Mammary epithelial cell (primary cell): ENCODE measurements at regions of chr20 and their contacts with region 1.

Region 1: GRCh38 chr20:19889011-19889953 is 127.9 kb upstream of the NAA20 start:
- DNase-seq: peak; percentile 56
- H3K4me3 ChIP-seq: peak overlapping the region; percentile 25 to 39 (median 31)
- H3K27ac ChIP-seq: peak overlapping the region; percentile 64
- H3K4me1 ChIP-seq: peaks cover 59% of the 10 kb centered on the region
- H3K27me3 ChIP-seq: no peaks in the 10 kb centered on the region
- CTCF ChIP-seq: no peak

Region 2: GRCh38 chr20:19764207-19764606 is 125.1 kb before region 1 on chr20:
- CTCF ChIA-PET with region 1: no interaction called
- dilution Hi-C with region 1: no loop called
- in situ Hi-C with region 1: no loop called
- intact Hi-C with region 1: no loop called
- DNase-seq: no peak
- H3K4me3 ChIP-seq: no peak overlapping the region
- H3K27ac ChIP-seq: no peak overlapping the region
- H3K4me1 ChIP-seq: peaks cover 2% of the 10 kb centered on the region
- H3K27me3 ChIP-seq: no peaks in the 10 kb centered on the region
- CTCF ChIP-seq: no peak

Region 3: DNA sequence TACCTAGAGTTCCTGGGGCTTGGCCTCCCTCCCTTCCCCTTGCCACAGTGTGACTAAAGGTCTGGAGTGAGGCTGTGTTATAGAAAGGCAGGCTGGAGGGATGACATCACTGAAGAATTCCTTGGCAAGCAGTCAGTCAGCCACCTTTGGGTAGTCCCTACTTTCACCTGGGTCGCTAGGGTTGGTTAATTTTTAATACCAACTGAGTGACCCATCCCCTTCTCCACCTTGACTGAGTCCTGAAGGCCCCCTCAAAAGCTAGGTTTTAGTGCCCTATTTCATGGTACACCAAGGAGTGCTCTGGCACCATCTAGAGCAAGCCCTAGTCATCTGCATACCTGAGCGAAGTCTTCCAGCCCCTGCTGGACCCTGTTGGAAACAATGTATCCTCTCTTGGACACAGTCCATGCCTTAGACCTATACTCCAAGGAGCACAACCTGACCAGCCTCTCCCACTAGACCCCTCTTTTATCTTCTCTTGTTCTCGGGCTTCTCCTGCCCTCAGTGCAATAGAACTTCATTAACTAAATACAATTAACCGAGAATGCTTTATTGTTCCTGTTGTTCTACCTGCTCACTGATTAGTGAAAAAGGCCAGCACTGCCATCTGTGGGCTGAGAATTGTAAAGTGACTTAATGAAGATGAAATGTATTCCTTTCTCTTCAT is 86.7 kb before region 1 on chr20:
- CTCF ChIA-PET with region 1: no interaction called
- dilution Hi-C with region 1: no loop called
- in situ Hi-C with region 1: no loop called
- intact Hi-C with region 1: loop called (anchors 1 kb)
- DNase-seq: peak; percentile 89
- H3K4me3 ChIP-seq: no peak overlapping the region
- H3K27ac ChIP-seq: peak overlapping the region; percentile 43
- H3K4me1 ChIP-seq: peaks cover 26% of the 10 kb centered on the region
- H3K27me3 ChIP-seq: no peaks in the 10 kb centered on the region
- CTCF ChIP-seq: peak; percentile 39 to 43

Region 4: GRCh38 chr20:19903168-19903811 is 14.0 kb after region 1 on chr20:
- CTCF ChIA-PET with region 1: interaction called, 17 read pairs
- dilution Hi-C with region 1: no loop called
- in situ Hi-C with region 1: no loop called
- intact Hi-C with region 1: no loop called
- DNase-seq: no peak
- H3K4me3 ChIP-seq: no peak overlapping the region
- H3K27ac ChIP-seq: no peak overlapping the region
- H3K4me1 ChIP-seq: no peaks in the 10 kb centered on the region
- H3K27me3 ChIP-seq: no peaks in the 10 kb centered on the region
- CTCF ChIP-seq: no peak

Region 5: GRCh38 chr20:19928328-19929011 is 39.2 kb after region 1 on chr20:
- CTCF ChIA-PET with region 1: no interaction called
- dilution Hi-C with region 1: no loop called
- in situ Hi-C with region 1: no loop called
- intact Hi-C with region 1: loop called (anchors 1 kb)
- DNase-seq: peak; percentile 97
- H3K4me3 ChIP-seq: no peak overlapping the region
- H3K27ac ChIP-seq: peak overlapping the region; percentile 80
- H3K4me1 ChIP-seq: peaks cover 26% of the 10 kb centered on the region
- H3K27me3 ChIP-seq: no peaks in the 10 kb centered on the region
- CTCF ChIP-seq: no peak

Region 6: GRCh38 chr20:19995220-19995863 is 106.1 kb after region 1 on chr20:
- CTCF ChIA-PET with region 1: interaction called, 3 read pairs
- dilution Hi-C with region 1: no loop called
- in situ Hi-C with region 1: no loop called
- intact Hi-C with region 1: loop called (anchors 1 kb)
- DNase-seq: no peak
- H3K4me3 ChIP-seq: no peak overlapping the region
- H3K27ac ChIP-seq: peak overlapping the region; percentile 100
- H3K4me1 ChIP-seq: peaks cover 52% of the 10 kb centered on the region
- H3K27me3 ChIP-seq: no peaks in the 10 kb centered on the region
- CTCF ChIP-seq: peak; percentile 70 to 80